ENCODE measurements at regions of chr9 and their contacts with region 1.

Region 1: DNA sequence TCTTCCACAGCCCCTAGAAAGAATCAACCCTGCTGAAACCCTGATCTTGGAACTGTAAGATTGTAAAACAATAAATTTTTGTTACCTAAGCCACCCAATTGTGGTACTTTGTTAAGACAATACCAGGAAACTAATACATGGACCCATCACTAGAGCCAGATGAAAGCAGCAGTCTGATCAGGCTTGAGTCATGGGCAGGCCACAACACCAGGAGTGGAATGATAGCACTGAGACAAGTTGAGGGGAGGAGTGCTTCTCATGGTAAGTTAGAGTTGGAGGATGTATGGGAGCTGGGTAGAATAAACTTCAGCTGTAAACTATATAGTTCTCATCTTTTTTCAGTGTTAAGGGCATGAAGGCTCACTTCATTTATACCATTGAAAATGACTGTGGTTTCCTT is 164.4 kb upstream of the OR13F1 start:
- DNase-seq: no peak
- ATAC-seq: no peak
- H3K4me3 Mint-ChIP-seq: no peak overlapping the region
- H3K27ac Mint-ChIP-seq: no peak overlapping the region
- H3K4me1 Mint-ChIP-seq: no peaks in the 10 kb centered on the region
- H3K27me3 Mint-ChIP-seq: no peaks in the 10 kb centered on the region
- CTCF ChIP-seq: no peak

Region 2: DNA sequence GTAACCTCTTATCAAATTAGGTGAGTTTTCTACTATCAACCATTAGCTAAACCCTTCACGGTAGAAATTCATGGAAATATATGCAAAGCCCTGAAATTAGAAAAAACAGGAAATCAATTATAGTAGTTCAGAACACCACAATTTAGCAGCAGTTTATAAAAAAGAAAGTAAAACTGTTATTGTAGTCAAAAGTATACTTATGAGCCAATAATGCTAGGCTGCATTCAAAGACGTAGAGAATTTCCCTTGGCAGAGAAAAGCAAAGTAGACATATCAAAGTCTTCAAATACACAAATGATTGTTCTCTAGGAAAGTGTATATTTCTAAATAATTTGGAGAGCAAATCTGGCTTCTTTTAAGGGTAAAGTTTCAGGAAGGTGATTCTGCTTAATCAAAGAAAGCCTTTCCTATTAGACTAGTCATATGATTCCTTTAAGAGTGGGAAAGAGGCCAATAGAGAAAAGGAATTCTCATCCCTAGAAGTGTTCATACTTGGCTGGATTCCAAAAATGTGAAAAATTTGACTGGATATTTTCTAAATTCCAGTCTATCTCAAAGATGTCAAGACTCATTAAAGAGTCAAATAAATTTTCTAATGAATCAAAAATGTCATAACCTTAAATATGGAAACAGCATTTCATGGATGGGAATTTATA is 60.0 kb before region 1 on chr9:
- CTCF ChIA-PET with region 1: no interaction called
- POLR2A ChIA-PET with region 1: no interaction called
- intact Hi-C with region 1: loop called (anchors 10 kb)
- DNase-seq: no peak
- ATAC-seq: no peak
- H3K4me3 Mint-ChIP-seq: no peak overlapping the region
- H3K27ac Mint-ChIP-seq: no peak overlapping the region
- H3K4me1 Mint-ChIP-seq: no peaks in the 10 kb centered on the region
- H3K27me3 Mint-ChIP-seq: no peaks in the 10 kb centered on the region
- CTCF ChIP-seq: no peak

Region 3: DNA sequence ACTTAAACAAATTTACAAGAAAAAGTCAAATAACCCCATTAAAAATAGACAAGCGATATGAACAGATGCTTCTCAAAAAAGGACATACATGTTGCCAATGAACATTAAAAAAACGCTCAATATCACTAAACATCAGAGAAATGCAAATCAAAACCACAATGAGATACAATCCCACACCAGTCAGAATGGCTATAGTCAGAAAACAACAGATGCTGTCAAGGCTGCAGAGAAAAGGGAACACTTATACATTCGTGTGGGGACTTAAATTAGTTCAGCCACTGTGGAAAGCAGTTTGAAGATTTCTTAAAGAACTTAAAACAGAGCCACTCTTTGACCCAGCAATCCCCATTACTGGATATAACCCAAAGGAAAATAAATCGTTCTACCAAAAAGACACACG is 175.2 kb after region 1 on chr9:
- CTCF ChIA-PET with region 1: no interaction called
- POLR2A ChIA-PET with region 1: no interaction called
- intact Hi-C with region 1: no loop called
- DNase-seq: no peak
- ATAC-seq: no peak
- H3K4me3 Mint-ChIP-seq: no peak overlapping the region
- H3K27ac Mint-ChIP-seq: no peak overlapping the region
- H3K4me1 Mint-ChIP-seq: no peaks in the 10 kb centered on the region
- H3K27me3 Mint-ChIP-seq: peaks cover 2% of the 10 kb centered on the region
- CTCF ChIP-seq: no peak

Measured in activated B cell treated with CpG ODN at 0.5 μM for 24 hours (primary cell).